ENCODE measurements at regions of chr3 and their contacts with region 1.

Region 1: GRCh38 chr3:158845765-158846350 is 44.0 kb downstream of the MFSD1 start:
- DNase-seq: no peak
- H3K4me3 ChIP-seq: no peak overlapping the region
- H3K27ac ChIP-seq: no peak overlapping the region
- H3K4me1 ChIP-seq: no peaks in the 10 kb centered on the region
- H3K27me3 ChIP-seq: no peaks in the 10 kb centered on the region
- CTCF ChIP-seq: peak; percentile 35 to 56 (median 39)

Region 2: DNA sequence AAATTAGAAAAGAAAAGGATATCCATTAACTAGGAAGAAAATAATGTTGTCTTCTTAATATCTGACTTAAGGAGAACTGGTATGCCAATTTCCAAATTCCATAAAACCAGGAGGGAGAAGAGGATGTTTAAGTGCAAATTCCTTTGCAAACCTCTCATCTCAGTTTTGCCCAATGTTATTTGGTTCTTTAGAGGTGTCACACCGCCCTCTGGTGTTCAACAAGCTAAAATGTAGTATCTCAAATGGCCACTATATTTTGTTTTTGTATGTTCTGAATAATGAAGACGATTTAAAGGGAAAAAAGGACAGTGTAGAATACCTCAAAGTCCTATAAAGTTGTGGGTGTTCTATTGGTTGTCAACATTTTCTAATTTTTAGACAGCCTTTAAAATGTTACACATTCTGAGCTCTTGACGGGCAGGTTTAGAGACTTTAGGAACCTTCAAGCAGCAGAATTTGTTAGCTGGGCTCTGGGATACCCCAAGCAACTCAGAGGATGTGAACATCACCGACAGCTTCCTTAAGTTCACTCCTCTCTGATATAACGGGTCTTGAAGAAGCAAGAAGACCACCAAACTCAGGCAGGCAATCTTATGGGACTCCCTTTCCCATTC is 414.3 kb after region 1 on chr3:
- intact Hi-C with region 1: loop called (anchors 5 kb)
- DNase-seq: no peak
- H3K4me3 ChIP-seq: no peak overlapping the region
- H3K27ac ChIP-seq: no peak overlapping the region
- H3K4me1 ChIP-seq: no peaks in the 10 kb centered on the region
- H3K27me3 ChIP-seq: no peaks in the 10 kb centered on the region
- CTCF ChIP-seq: peak; percentile 40 to 61 (median 59)